ENCODE measurements at regions of chr15 and their contacts with region 1.

Region 1: DNA sequence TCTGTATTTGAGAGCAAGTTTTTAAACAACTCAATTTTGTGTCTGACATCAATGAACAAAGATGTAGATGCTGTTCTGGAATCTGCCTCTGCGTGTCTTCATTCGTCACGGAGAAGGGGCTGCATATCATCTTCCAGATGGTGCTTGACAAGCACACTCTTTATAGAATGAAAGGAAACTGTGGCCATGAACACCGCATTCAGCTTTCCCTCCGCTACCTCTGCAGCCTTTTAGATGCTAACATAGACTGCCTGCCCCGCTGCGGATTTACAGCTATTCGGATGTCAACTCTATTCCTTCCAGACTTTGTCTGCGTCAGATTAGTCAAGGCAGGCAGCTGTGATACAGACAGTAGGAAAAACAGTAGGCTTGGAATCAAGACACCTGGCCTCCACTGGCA is 232.9 kb downstream of the TJP1 start:
- DNase-seq: no peak
- H3K4me3 ChIP-seq: no peak overlapping the region
- H3K27ac ChIP-seq: no peak overlapping the region
- H3K4me1 ChIP-seq: no peaks in the 10 kb centered on the region
- H3K27me3 ChIP-seq: no peaks in the 10 kb centered on the region
- CTCF ChIP-seq: no peak

Region 2: DNA sequence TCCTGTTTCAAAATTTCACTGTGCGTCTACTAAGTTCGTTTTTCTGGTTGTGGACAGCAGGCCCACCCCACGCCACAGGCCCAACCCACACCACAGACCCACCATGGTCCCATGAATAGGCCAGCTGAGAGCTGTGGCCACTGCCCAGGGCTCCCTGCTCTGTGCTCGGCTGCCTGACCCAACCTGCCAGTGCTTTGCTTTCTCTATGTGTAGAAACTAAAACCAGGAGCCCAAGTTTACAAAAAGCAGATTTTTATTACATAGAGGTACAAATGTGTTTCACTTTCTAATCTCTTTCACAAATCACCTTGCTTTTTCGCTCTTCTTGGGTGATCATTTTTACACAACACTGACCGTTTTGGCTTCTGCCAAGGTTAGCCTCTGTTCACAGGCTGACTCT is 1336.6 kb before region 1 on chr15:
- intact Hi-C with region 1: loop called (anchors 5 kb)
- DNase-seq: no peak
- H3K4me3 ChIP-seq: no peak overlapping the region
- H3K27ac ChIP-seq: no peak overlapping the region
- H3K4me1 ChIP-seq: no peaks in the 10 kb centered on the region
- H3K27me3 ChIP-seq: no peaks in the 10 kb centered on the region
- CTCF ChIP-seq: no peak

Region 3: GRCh38 chr15:29208352-29208751 is 381.1 kb before region 1 on chr15:
- intact Hi-C with region 1: no loop called
- DNase-seq: no peak
- H3K4me3 ChIP-seq: no peak overlapping the region
- H3K27ac ChIP-seq: no peak overlapping the region
- H3K4me1 ChIP-seq: no peaks in the 10 kb centered on the region
- H3K27me3 ChIP-seq: no peaks in the 10 kb centered on the region
- CTCF ChIP-seq: no peak

Region 4: DNA sequence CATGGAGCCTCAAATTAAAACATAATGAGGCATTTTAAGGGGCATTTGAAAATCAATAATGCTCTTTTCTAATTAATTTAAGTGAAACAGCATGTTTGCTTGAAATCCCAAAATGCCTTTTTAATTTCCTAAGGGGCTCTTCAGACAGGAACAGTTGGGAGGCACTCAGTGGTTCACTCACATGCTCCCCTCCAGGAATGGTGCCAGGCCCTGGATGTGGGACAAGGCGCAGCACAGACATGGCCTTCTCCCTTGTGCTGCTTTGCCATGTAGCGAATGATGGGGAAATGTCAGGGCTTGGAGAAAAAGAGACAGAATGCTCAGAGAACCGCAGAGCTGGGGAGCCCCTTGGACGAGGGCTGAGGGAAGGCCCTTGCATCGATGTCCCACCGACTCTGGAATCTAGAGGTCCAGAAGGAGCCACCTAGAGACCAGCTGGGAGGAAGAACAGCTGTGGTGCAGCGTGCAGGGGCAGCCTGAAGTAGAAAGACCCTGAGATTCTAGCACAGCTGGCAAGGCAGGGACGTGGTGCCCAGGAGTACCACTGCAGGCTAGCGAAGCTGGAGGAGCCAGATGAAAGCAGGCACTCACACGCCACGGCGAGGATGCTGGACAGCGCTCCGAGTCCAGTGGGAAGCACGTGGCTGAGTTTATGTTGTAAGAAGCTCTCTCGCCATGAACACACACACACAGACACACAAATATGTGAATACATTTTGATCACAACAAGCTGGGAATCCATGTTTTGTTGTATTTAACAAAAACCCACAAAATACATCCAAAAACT is 346.8 kb before region 1 on chr15:
- intact Hi-C with region 1: no loop called
- DNase-seq: no peak
- H3K4me3 ChIP-seq: no peak overlapping the region
- H3K27ac ChIP-seq: no peak overlapping the region
- H3K4me1 ChIP-seq: no peaks in the 10 kb centered on the region
- H3K27me3 ChIP-seq: no peaks in the 10 kb centered on the region
- CTCF ChIP-seq: no peak

Region 5: GRCh38 chr15:29656636-29657475 is 67.5 kb after region 1 on chr15:
- intact Hi-C with region 1: no loop called
- DNase-seq: no peak
- H3K4me3 ChIP-seq: no peak overlapping the region
- H3K27ac ChIP-seq: no peak overlapping the region
- H3K4me1 ChIP-seq: no peaks in the 10 kb centered on the region
- H3K27me3 ChIP-seq: no peaks in the 10 kb centered on the region
- CTCF ChIP-seq: no peak

Measured in tibial artery (tissue), 4 donors.